CD14-positive monocyte (primary cell): ENCODE measurements at regions of chr17 and their contacts with region 1.

Region 1: GRCh38 chr17:1005361-1005946 is 8.5 kb downstream of the TIMM22 start:
- DNase-seq: no peak
- H3K4me3 ChIP-seq: no peak overlapping the region
- H3K4me3 Mint-ChIP-seq: no peak overlapping the region
- H3K27ac ChIP-seq: no peak overlapping the region
- H3K27ac Mint-ChIP-seq: peak overlapping the region in 5 of 7 donors; percentile 10 to 70 (median 50)
- H3K4me1 ChIP-seq: no peaks in the 10 kb centered on the region
- H3K4me1 Mint-ChIP-seq: no peaks in the 10 kb centered on the region
- H3K27me3 ChIP-seq: no peaks in the 10 kb centered on the region
- H3K27me3 Mint-ChIP-seq: peaks cover 0 to 2% (median 0%) of the 10 kb centered on the region in 3 donors
- CTCF ChIP-seq: no peak

Region 2: GRCh38 chr17:921161-921560 is 84.3 kb before region 1 on chr17:
- intact Hi-C with region 1: no loop called
- DNase-seq: no peak
- H3K4me3 ChIP-seq: no peak overlapping the region
- H3K4me3 Mint-ChIP-seq: no peak overlapping the region
- H3K27ac ChIP-seq: no peak overlapping the region
- H3K27ac Mint-ChIP-seq: no peak overlapping the region
- H3K4me1 ChIP-seq: no peaks in the 10 kb centered on the region
- H3K4me1 Mint-ChIP-seq: no peaks in the 10 kb centered on the region
- H3K27me3 ChIP-seq: no peaks in the 10 kb centered on the region
- H3K27me3 Mint-ChIP-seq: peaks cover 0 to 13% (median 7%) of the 10 kb centered on the region in 3 donors
- CTCF ChIP-seq: no peak

Region 3: DNA sequence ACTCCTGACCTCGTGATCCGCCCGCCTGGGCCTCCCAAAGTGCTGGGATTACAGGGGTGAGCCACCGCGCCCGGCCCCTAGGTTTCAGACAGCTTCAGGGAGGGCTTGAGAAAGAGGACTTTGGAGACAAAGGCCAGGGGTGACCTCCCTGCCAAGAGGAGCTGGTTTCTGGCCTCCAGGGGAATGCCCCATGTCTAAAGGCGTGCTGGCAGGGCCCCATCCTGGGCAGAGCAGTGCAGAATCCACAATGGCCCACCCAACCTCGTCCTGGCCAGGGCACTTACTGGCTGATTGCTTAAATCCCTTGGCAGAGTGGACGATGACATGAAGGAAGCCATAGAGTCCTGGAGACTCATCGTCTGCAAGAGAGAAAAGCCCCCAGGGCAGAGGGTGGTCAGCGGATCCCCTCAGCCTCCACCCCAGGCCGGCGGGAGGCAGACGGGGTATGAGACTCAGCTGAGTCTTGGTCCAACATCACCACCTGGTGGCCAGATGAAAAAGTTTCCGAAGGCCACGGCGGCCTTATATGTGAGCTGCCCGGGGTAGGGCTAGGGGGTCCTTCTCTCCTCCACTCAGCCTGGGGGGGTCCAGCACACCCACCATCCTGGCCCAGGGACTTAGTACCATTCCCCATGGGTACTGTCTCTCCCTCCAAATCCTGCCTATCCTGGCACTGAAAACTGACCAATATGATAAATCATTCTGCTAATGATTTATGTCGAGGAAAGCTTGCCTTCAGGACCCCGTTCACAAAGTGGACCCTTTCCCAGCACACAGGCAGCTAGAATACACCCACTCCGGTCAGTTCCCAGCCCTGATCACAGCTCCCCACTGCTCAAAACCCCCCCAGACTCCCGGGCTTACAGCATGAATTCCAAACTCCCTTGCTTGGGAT is 50.5 kb after region 1 on chr17:
- intact Hi-C with region 1: loop called in 1 of 2 experiments (anchors 10 kb)
- DNase-seq: peak; percentile 32 to 45 (median 40)
- H3K4me3 ChIP-seq: no peak overlapping the region
- H3K4me3 Mint-ChIP-seq: no peak overlapping the region
- H3K27ac ChIP-seq: peak overlapping the region in 1 of 2 donors; percentile 45
- H3K27ac Mint-ChIP-seq: peak overlapping the region in 2 of 7 donors; percentile 53 to 74
- H3K4me1 ChIP-seq: no peaks in the 10 kb centered on the region
- H3K4me1 Mint-ChIP-seq: peaks cover 2% of the 10 kb centered on the region
- H3K27me3 ChIP-seq: no peaks in the 10 kb centered on the region
- H3K27me3 Mint-ChIP-seq: peaks cover 0 to 1% (median 0%) of the 10 kb centered on the region in 3 donors
- CTCF ChIP-seq: peak; percentile 89